Natural killer cell (primary cell): ENCODE measurements at regions of chr11 and their contacts with region 1.

Region 1: GRCh38 chr11:7986768-7987559 is at the start of gene EIF3F:
- DNase-seq: peak; percentile 73 to 98
- ATAC-seq: peak; percentile 95 to 99 (median 97)
- H3K4me3 ChIP-seq: peak within 1 kb of the TSS; percentile 64
- H3K4me3 Mint-ChIP-seq: peak within 1 kb of the TSS; percentile 94
- H3K27ac ChIP-seq: peak within 1 kb of the TSS; percentile 59
- H3K27ac Mint-ChIP-seq: peak within 1 kb of the TSS; percentile 92 to 95
- H3K4me1 ChIP-seq: peaks cover 13% of the 10 kb centered on the region
- H3K4me1 Mint-ChIP-seq: peaks cover 47 to 54% of the 10 kb centered on the region in 2 donors
- H3K27me3 ChIP-seq: no peaks in the 10 kb centered on the region
- H3K27me3 Mint-ChIP-seq: peaks cover 0 to 6% of the 10 kb centered on the region in 2 donors
- CTCF ChIP-seq: peak; percentile 61
- total RNA-seq, gene EIF3F: 232 to 250 (median 247) TPM

Region 2: DNA sequence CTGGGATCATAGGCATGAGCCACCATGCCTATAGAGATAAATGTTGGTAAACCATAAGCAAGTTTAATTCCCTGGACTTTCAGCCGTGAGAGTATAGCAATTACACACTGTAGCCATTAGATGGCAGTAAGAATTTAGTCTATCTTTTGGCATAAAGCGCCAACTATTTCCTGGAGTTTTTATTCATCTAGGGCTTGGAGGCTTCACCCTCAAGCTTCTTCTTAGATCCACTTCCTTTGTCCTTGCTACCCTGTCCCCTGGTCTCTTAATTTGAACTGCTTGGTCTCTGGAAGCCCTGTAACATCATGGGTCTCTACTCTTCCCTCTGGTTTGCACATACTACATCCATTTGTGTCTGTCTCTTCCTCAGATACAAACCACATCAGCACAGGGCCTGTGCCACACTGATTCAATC is 94.1 kb before region 1 on chr11:
- intact Hi-C with region 1: loop called (anchors 2 kb)
- DNase-seq: peak in 1 of 2 donors; percentile 58
- ATAC-seq: peak in 2 of 3 donors; percentile 52 to 68
- H3K4me3 ChIP-seq: no peak overlapping the region
- H3K4me3 Mint-ChIP-seq: no peak overlapping the region
- H3K27ac ChIP-seq: no peak overlapping the region
- H3K27ac Mint-ChIP-seq: no peak overlapping the region
- H3K4me1 ChIP-seq: no peaks in the 10 kb centered on the region
- H3K4me1 Mint-ChIP-seq: no peaks in the 10 kb centered on the region
- H3K27me3 ChIP-seq: no peaks in the 10 kb centered on the region
- H3K27me3 Mint-ChIP-seq: peaks cover 0 to 33% of the 10 kb centered on the region in 2 donors
- CTCF ChIP-seq: no peak